Activated CD4-positive, alpha-beta memory T cell treated with anti-CD3 and anti-CD28 coated beads for 36 hours (primary cell): ENCODE measurements at regions of chr1 and their contacts with region 1.

Region 1: GRCh38 chr1:152869808-152870419 is 8.2 kb upstream of the SMCP start:
- DNase-seq: peak; percentile 72
- H3K4me3 Mint-ChIP-seq: no peak overlapping the region
- H3K27ac Mint-ChIP-seq: no peak overlapping the region
- H3K4me1 Mint-ChIP-seq: no peaks in the 10 kb centered on the region
- H3K27me3 Mint-ChIP-seq: peaks cover 5% of the 10 kb centered on the region

Region 2: GRCh38 chr1:152768847-152769533 is 100.9 kb before region 1 on chr1:
- CTCF ChIA-PET with region 1: no interaction called
- POLR2A ChIA-PET with region 1: no interaction called
- intact Hi-C with region 1: no loop called
- DNase-seq: no peak
- H3K4me3 Mint-ChIP-seq: no peak overlapping the region
- H3K27ac Mint-ChIP-seq: no peak overlapping the region
- H3K4me1 Mint-ChIP-seq: no peaks in the 10 kb centered on the region
- H3K27me3 Mint-ChIP-seq: peaks cover 2% of the 10 kb centered on the region

Region 3: GRCh38 chr1:152926091-152926490 is 56.2 kb after region 1 on chr1:
- CTCF ChIA-PET with region 1: interaction called, 6 read pairs
- POLR2A ChIA-PET with region 1: no interaction called
- intact Hi-C with region 1: loop called (anchors 2 kb)
- DNase-seq: no peak
- H3K4me3 Mint-ChIP-seq: no peak overlapping the region
- H3K27ac Mint-ChIP-seq: no peak overlapping the region
- H3K4me1 Mint-ChIP-seq: no peaks in the 10 kb centered on the region
- H3K27me3 Mint-ChIP-seq: peaks cover 20% of the 10 kb centered on the region

Region 4: GRCh38 chr1:153220606-153221303 is 350.8 kb after region 1 on chr1:
- CTCF ChIA-PET with region 1: interaction called, 7 read pairs
- POLR2A ChIA-PET with region 1: no interaction called
- intact Hi-C with region 1: loop called (anchors 1 kb)
- DNase-seq: no peak
- H3K4me3 Mint-ChIP-seq: no peak overlapping the region
- H3K27ac Mint-ChIP-seq: no peak overlapping the region
- H3K4me1 Mint-ChIP-seq: no peaks in the 10 kb centered on the region
- H3K27me3 Mint-ChIP-seq: peaks cover 8% of the 10 kb centered on the region

Region 5: DNA sequence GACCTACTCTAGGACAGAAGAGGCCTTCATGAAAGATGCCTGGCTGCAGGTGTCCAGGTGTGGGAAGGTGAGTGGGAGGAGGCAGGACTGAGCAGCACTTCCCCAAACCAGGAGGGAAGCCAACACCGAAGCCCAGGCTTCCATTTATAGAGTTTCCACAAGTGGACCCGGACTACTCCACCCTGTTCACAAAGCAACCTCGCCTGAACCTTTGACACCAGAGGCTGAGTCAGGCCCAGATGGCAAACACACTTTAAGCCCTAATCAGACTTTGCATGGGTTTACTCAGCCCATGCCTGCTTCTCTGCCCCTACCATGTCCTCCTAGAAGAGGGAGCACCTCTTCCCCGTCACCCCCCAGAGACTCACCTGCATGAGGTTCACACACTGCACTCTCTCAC is 361.4 kb after region 1 on chr1:
- CTCF ChIA-PET with region 1: interaction called, 12 read pairs
- POLR2A ChIA-PET with region 1: no interaction called
- intact Hi-C with region 1: no loop called
- DNase-seq: no peak
- H3K4me3 Mint-ChIP-seq: no peak overlapping the region
- H3K27ac Mint-ChIP-seq: no peak overlapping the region
- H3K4me1 Mint-ChIP-seq: no peaks in the 10 kb centered on the region
- H3K27me3 Mint-ChIP-seq: peaks cover 12% of the 10 kb centered on the region

Region 6: GRCh38 chr1:153288634-153289275 is 418.8 kb after region 1 on chr1:
- CTCF ChIA-PET with region 1: no interaction called
- POLR2A ChIA-PET with region 1: no interaction called
- intact Hi-C with region 1: loop called (anchors 5 kb)
- DNase-seq: peak; percentile 36
- H3K4me3 Mint-ChIP-seq: no peak overlapping the region
- H3K27ac Mint-ChIP-seq: no peak overlapping the region
- H3K4me1 Mint-ChIP-seq: peaks cover 17% of the 10 kb centered on the region
- H3K27me3 Mint-ChIP-seq: no peaks in the 10 kb centered on the region